A549 (cell line): ENCODE measurements at regions of chr10 and their contacts with region 1.

Region 1: GRCh38 chr10:70461215-70461986 is 17.2 kb upstream of the PALD1 start:
- DNase-seq: peak; percentile 64 to 87
- ATAC-seq: peak; percentile 88 to 91
- H3K4me3 ChIP-seq: no peak overlapping the region
- H3K27ac ChIP-seq: no peak overlapping the region
- H3K4me1 ChIP-seq: peaks cover 5% of the 10 kb centered on the region
- CTCF ChIP-seq: peak; percentile 84
- EP300 ChIP-seq: no peak
- POLR2A ChIP-seq: no peak
- RAD21 ChIP-seq: peak; percentile 88 to 92

Region 2: GRCh38 chr10:70106958-70107791 is 354.2 kb before region 1 on chr10:
- CTCF ChIA-PET with region 1: no interaction called
- POLR2A ChIA-PET with region 1: no interaction called
- DNase-seq: peak in 1 of 2 experiments; percentile 46
- ATAC-seq: peak; percentile 70 to 86; a peak in 5 of 6 replicates
- H3K4me3 ChIP-seq: no peak overlapping the region
- H3K27ac ChIP-seq: peak overlapping the region in 1 of 2 experiments; percentile 7; a peak in 1 of 6 replicates
- H3K4me1 ChIP-seq: no peaks in the 10 kb centered on the region
- CTCF ChIP-seq: peak; percentile 52
- EP300 ChIP-seq: no peak
- POLR2A ChIP-seq: no peak
- RAD21 ChIP-seq: peak in 1 of 2 experiments; percentile 33; a peak in 2 of 5 replicates

Region 3: DNA sequence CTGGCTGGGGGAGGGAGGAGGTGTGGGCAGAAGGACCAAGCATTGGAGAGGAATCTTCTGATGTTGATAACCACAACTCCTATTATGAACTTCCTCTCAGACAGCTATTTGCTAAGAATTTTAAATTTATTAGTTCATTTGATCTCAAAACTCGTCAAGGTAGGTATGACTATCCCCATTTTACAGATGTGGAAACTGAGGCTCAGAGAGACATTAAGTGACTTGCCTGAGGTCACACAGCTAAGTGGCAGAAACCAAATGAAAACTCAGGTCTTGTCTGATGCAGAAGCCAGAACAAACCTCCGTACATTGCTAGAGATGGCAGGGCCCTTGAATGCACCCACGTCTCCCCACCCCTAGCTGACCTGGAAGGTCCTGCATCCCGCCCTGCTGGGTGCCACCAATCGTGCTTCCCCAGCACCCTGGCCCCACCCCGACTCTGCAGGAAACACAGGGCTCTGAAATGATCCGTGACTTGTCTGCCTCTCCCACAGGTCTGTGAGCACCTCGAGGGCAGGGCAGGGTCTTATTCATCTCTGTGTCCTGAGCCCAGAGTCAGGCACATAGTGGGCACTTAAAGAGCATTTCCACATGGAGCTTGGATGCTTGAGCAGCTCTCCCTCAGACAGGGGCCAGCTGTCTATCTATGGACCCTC is 11.5 kb after region 1 on chr10:
- CTCF ChIA-PET with region 1: interaction called, 53 read pairs
- POLR2A ChIA-PET with region 1: no interaction called
- DNase-seq: no peak
- ATAC-seq: no peak
- H3K4me3 ChIP-seq: no peak overlapping the region
- H3K27ac ChIP-seq: no peak overlapping the region
- H3K4me1 ChIP-seq: peaks cover 23% of the 10 kb centered on the region; the same call in 2 of the 3 replicates
- CTCF ChIP-seq: no peak
- EP300 ChIP-seq: no peak
- POLR2A ChIP-seq: no peak
- RAD21 ChIP-seq: no peak

Region 4: GRCh38 chr10:70493660-70494234 is 32.3 kb after region 1 on chr10:
- CTCF ChIA-PET with region 1: interaction called, 22 read pairs
- POLR2A ChIA-PET with region 1: no interaction called
- DNase-seq: no peak
- ATAC-seq: no peak
- H3K4me3 ChIP-seq: no peak overlapping the region
- H3K27ac ChIP-seq: no peak overlapping the region
- H3K4me1 ChIP-seq: no peaks in the 10 kb centered on the region
- CTCF ChIP-seq: no peak
- EP300 ChIP-seq: no peak
- POLR2A ChIP-seq: no peak
- RAD21 ChIP-seq: no peak

Region 5: DNA sequence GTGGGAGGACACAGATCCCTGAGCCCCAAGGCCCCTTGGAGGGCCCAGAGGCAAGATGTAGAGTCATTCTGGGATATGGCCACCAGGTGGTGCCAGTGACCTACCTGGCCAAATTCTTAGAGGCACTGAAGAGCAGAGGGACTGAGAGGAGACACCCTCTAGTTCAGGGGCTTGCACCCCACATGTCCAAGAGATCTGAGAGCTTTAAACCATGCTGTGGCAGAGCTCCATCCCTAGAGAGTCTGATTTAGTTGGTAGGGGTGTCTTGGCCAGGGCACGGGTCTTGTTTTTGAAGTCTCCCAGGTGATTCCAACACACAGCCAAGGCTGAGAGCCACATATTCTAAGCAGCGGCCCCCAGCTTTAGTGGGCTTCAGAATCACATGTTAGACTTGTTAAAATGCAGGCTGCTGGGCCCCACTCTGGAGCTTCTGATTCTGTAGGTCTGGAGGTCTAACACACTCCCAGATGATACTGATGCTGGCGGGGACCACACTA is 88.6 kb after region 1 on chr10:
- CTCF ChIA-PET with region 1: interaction called, 376 read pairs
- POLR2A ChIA-PET with region 1: no interaction called
- DNase-seq: peak; percentile 60 to 78
- ATAC-seq: peak; percentile 84 to 95
- H3K4me3 ChIP-seq: no peak overlapping the region
- H3K27ac ChIP-seq: no peak overlapping the region
- H3K4me1 ChIP-seq: no peaks in the 10 kb centered on the region
- CTCF ChIP-seq: peak; percentile 87
- EP300 ChIP-seq: no peak
- POLR2A ChIP-seq: no peak
- RAD21 ChIP-seq: peak; percentile 89